ENCODE measurements at regions of chr7 and their contacts with region 1.

Region 1: GRCh38 chr7:143416565-143417149 is 8.0 kb upstream of the EPHA1 start:
- DNase-seq: no peak
- H3K4me3 ChIP-seq: no peak overlapping the region
- CTCF ChIP-seq: peak; percentile 48

Region 2: GRCh38 chr7:143214789-143215679 is 201.6 kb before region 1 on chr7:
- CTCF ChIA-PET with region 1: interaction called, 13 read pairs
- POLR2A ChIA-PET with region 1: no interaction called
- DNase-seq: peak; percentile 62
- H3K4me3 ChIP-seq: no peak overlapping the region
- CTCF ChIP-seq: peak; percentile 93

Region 3: GRCh38 chr7:143380255-143380645 is 36.4 kb before region 1 on chr7:
- CTCF ChIA-PET with region 1: interaction called, 21 read pairs
- POLR2A ChIA-PET with region 1: no interaction called
- DNase-seq: no peak
- H3K4me3 ChIP-seq: peak overlapping the region; percentile 91
- CTCF ChIP-seq: peak; percentile 86

Region 4: DNA sequence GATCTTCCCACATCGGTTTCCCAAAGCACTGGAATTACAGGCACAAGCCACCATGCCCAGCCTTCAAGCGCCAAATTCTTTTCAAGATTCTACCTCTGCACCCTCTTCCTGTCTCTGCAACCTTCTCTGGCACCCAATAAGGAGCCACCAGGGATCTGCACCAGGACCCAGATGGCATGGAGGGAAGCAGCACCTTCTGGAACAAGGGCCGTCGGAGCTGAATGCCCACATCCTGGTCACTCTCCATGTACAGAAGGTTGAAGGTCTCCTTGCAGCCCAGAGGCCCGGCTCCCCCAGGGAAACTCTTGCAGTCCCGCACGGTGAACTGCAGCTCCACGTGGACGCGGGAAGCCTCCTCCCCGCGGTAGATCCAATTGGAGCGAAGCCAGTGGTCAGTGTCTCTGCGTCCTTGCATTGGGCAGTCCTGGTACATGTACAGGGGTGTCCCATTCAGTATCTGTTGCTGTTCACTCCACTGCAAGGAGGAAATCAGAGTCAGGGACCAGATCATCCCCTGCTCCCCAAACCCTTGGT is 15.5 kb before region 1 on chr7:
- CTCF ChIA-PET with region 1: interaction called, 49 read pairs
- POLR2A ChIA-PET with region 1: no interaction called
- DNase-seq: no peak
- H3K4me3 ChIP-seq: no peak overlapping the region
- CTCF ChIP-seq: no peak

Region 5: DNA sequence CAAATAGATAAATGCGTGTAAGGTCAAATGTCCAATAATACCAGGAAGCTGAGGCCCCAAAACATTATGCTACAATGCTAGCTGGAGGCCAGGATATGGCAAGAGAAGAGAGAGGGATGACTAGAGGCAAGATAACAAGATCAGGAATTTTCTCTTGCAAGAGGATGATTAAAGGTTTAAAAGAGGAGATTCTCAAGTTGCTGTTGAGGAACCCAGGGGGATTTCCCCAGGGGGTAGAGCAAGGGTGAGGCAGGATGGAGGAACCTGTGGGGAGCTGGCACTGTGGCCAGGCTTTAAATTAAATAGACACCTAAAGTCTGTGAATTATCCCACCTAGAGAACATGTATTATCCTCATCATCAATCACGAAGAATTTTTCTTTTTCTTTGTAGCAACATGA is 23.2 kb after region 1 on chr7:
- CTCF ChIA-PET with region 1: interaction called, 16 read pairs
- POLR2A ChIA-PET with region 1: no interaction called
- DNase-seq: no peak
- H3K4me3 ChIP-seq: no peak overlapping the region
- CTCF ChIP-seq: no peak

Measured in AG04449 (cell line).